KBM-7 (cell line): ENCODE measurements at regions of chr3 and their contacts with region 1.

Region 1: GRCh38 chr3:62558549-62559112 is 185.3 kb upstream of the FEZF2 start:
- DNase-seq: peak; percentile 65

Region 2: GRCh38 chr3:62007036-62007818 is 551.4 kb before region 1 on chr3:
- in situ Hi-C with region 1: no loop called
- DNase-seq: no peak

Region 3: DNA sequence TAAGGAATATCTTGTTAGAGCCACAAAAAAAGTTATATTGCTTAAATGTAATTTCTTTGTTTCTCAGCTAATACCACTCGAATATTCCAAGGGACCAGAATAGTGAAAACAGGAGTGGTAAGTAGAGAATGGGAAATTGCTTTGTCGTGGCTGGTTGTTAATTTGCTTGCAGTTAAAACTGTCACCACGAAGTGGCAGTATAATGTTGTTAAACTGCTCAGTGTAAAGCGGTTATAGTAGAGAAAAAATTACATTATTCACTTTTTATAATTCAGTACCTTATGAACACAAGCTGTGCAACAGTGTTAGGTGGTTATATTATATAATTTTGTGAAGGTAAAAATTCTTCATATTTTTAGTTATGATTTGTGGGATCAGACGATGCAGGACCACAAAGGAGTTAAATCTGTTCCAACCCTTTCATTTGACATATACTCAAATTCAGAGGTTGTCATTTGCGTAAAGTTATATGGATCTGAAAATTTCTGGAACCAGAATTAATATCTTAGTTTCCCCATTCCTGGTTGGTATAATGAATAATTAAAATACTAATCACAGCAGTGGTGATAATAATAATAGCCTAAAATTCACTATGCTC is 357.1 kb before region 1 on chr3:
- in situ Hi-C with region 1: loop called (anchors 25 kb)
- DNase-seq: peak; percentile 53

Region 4: DNA sequence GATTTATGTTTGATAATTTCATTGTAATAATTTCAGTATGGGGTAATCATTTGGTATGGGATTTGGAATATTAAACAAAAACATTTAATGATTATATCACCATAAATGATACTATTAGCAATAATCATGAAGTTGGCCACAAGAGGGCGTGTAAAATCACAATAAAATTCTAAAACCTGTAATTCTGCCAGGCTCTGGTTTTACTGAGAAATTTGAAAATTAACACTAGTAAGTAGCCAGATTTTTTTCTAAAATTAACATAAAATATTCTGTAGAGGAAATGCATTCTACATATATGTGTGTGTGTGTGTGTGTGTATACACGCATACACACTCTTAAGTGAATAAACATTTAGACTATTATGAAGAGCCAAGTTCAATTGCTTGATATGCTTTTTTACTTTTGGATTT is 225.8 kb before region 1 on chr3:
- in situ Hi-C with region 1: loop called (anchors 25 kb)
- DNase-seq: peak; percentile 6